Dorsolateral prefrontal cortex (tissue), 120 donors: ENCODE measurements at regions of chr2 and their contacts with region 1.

Region 1: GRCh38 chr2:161308178-161308955 is at the start of gene PSMD14:
- DNase-seq: peak; percentile 84 to 95 (median 90)
- H3K4me3 ChIP-seq: peak within 1 kb of the TSS; percentile 58 to 95 (median 80)
- H3K27ac ChIP-seq: peak within 1 kb of the TSS in 57 of 59 donors; percentile 30 to 94 (median 79)
- H3K27me3 ChIP-seq: no peaks in the 10 kb centered on the region
- CTCF ChIP-seq: peak in 19 of 56 donors; percentile 5 to 46 (median 29)
- total RNA-seq, gene PSMD14: 31.1 to 68.1 (median 53.3) TPM

Region 2: DNA sequence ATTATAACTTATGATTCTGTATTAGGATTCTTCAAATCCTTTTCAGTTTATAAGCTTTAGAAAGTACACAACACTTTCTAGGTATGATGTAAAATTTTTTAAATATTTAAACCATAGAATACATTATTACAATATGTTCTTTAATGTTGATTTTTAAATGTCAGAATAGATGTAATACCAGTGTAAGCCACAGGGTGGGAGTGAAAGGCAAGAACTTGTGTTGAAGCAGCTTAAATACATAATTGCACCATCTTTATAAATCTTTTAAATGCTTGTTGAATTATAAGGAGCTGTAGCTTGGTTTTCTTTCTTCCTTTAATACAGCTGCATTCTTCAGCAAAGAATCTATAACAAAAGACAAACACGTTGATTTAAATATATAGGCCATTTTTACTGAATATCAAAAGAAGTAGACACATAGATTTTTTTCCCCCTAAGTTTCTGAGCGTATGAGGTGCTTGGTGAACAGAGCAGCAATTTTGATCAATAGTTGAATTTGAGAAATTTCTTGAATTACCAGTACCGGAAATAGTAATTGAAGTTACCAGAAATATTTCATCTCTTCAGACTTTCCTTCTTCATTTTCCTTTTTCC is 85.1 kb before region 1 on chr2:
- intact Hi-C with region 1: no loop called
- DNase-seq: no peak
- H3K4me3 ChIP-seq: no peak overlapping the region
- H3K27ac ChIP-seq: no peak overlapping the region
- H3K27me3 ChIP-seq: no peaks in the 10 kb centered on the region
- CTCF ChIP-seq: peak; percentile 66 to 95 (median 86)

Region 3: DNA sequence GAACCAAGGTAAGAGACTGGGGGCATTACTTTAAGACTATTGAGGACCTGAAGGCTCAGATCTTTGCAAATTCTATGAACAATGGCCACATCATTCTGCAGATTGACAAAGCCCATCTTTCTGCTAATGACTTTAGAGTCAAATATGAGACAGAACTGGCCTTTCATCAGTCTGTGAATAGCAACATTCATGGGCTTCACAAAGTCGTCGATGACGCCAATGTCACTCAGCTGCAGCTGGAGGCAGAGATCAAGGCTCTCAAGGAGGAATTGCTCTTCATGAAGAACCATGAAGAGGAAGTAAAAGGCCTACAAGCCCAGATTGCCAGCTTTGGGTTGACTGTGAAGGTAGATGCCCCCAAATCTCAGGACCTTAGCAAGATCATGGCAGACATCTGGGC is 272.1 kb after region 1 on chr2:
- intact Hi-C with region 1: loop called in 1 of 2 experiments (anchors 5 kb)
- DNase-seq: peak in 5 of 10 donors; percentile 12 to 65 (median 47)
- H3K4me3 ChIP-seq: no peak overlapping the region
- H3K27ac ChIP-seq: peak overlapping the region in 55 of 59 donors; percentile 16 to 93 (median 77)
- H3K27me3 ChIP-seq: no peaks in the 10 kb centered on the region
- CTCF ChIP-seq: peak in 3 of 56 donors; percentile 7 to 20 (median 14)